ENCODE measurements at regions of chr1 and their contacts with region 1.

Region 1: GRCh38 chr1:107750358-107750959 is 214.5 kb downstream of the VAV3 start:
- DNase-seq: peak; percentile 87
- H3K4me3 Mint-ChIP-seq: no peak overlapping the region
- H3K27ac Mint-ChIP-seq: no peak overlapping the region
- H3K4me1 Mint-ChIP-seq: no peaks in the 10 kb centered on the region
- H3K27me3 Mint-ChIP-seq: no peaks in the 10 kb centered on the region
- CTCF ChIP-seq: peak; percentile 77

Region 2: GRCh38 chr1:106022312-106022902 is 1728.1 kb before region 1 on chr1:
- CTCF ChIA-PET with region 1: no interaction called
- POLR2A ChIA-PET with region 1: interaction called, 3 read pairs
- intact Hi-C with region 1: loop called (anchors 10 kb)
- DNase-seq: peak; percentile 20
- H3K4me3 Mint-ChIP-seq: no peak overlapping the region
- H3K27ac Mint-ChIP-seq: no peak overlapping the region
- H3K4me1 Mint-ChIP-seq: peaks cover 7% of the 10 kb centered on the region
- H3K27me3 Mint-ChIP-seq: no peaks in the 10 kb centered on the region
- CTCF ChIP-seq: peak; percentile 33

Region 3: GRCh38 chr1:107277022-107277421 is 473.4 kb before region 1 on chr1:
- CTCF ChIA-PET with region 1: interaction called, 77 read pairs
- POLR2A ChIA-PET with region 1: no interaction called
- intact Hi-C with region 1: loop called (anchors 1 kb)
- DNase-seq: peak; percentile 63
- H3K4me3 Mint-ChIP-seq: no peak overlapping the region
- H3K27ac Mint-ChIP-seq: no peak overlapping the region
- H3K4me1 Mint-ChIP-seq: peaks cover 5% of the 10 kb centered on the region
- H3K27me3 Mint-ChIP-seq: no peaks in the 10 kb centered on the region
- CTCF ChIP-seq: peak; percentile 79

Region 4: GRCh38 chr1:107547363-107548155 is 202.9 kb before region 1 on chr1:
- CTCF ChIA-PET with region 1: interaction called, 10 read pairs
- POLR2A ChIA-PET with region 1: interaction called, 3 read pairs
- intact Hi-C with region 1: no loop called
- DNase-seq: peak; percentile 55
- H3K4me3 Mint-ChIP-seq: no peak overlapping the region
- H3K27ac Mint-ChIP-seq: no peak overlapping the region
- H3K4me1 Mint-ChIP-seq: peaks cover 6% of the 10 kb centered on the region
- H3K27me3 Mint-ChIP-seq: no peaks in the 10 kb centered on the region
- CTCF ChIP-seq: no peak

Region 5: DNA sequence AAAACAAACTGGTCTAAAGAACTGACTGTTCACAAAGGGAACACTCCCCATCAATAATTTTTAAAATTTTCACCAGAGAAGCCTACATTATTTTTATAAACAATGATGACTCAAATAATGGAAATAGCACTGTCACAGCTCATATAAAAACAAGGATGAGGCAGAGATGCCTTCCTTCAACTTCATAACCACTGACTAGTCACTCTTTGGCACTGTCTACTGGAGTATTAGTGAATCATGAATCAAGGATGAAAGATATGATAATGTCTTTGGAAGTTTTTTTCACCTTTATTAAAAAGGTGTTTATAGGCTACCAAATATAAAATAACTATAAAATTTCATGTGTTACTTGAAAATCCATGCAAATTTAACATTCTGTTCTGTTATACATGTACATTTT is 102.4 kb before region 1 on chr1:
- CTCF ChIA-PET with region 1: interaction called, 5 read pairs
- POLR2A ChIA-PET with region 1: interaction called, 3 read pairs
- intact Hi-C with region 1: loop called (anchors 5 kb)
- DNase-seq: peak; percentile 73
- H3K4me3 Mint-ChIP-seq: no peak overlapping the region
- H3K27ac Mint-ChIP-seq: peak overlapping the region; percentile 54
- H3K4me1 Mint-ChIP-seq: peaks cover 35% of the 10 kb centered on the region
- H3K27me3 Mint-ChIP-seq: no peaks in the 10 kb centered on the region
- CTCF ChIP-seq: no peak

Region 6: GRCh38 chr1:107683191-107683657 is 67.2 kb before region 1 on chr1:
- CTCF ChIA-PET with region 1: interaction called, 12 read pairs
- POLR2A ChIA-PET with region 1: interaction called, 25 read pairs
- intact Hi-C with region 1: no loop called
- DNase-seq: peak; percentile 40
- H3K4me3 Mint-ChIP-seq: peak overlapping the region; percentile 60
- H3K27ac Mint-ChIP-seq: peak overlapping the region; percentile 85
- H3K4me1 Mint-ChIP-seq: peaks cover 33% of the 10 kb centered on the region
- H3K27me3 Mint-ChIP-seq: no peaks in the 10 kb centered on the region
- CTCF ChIP-seq: no peak

Measured in MCF 10A (cell line).